A549 (cell line): ENCODE measurements at regions of chr17 and their contacts with region 1.

Region 1: DNA sequence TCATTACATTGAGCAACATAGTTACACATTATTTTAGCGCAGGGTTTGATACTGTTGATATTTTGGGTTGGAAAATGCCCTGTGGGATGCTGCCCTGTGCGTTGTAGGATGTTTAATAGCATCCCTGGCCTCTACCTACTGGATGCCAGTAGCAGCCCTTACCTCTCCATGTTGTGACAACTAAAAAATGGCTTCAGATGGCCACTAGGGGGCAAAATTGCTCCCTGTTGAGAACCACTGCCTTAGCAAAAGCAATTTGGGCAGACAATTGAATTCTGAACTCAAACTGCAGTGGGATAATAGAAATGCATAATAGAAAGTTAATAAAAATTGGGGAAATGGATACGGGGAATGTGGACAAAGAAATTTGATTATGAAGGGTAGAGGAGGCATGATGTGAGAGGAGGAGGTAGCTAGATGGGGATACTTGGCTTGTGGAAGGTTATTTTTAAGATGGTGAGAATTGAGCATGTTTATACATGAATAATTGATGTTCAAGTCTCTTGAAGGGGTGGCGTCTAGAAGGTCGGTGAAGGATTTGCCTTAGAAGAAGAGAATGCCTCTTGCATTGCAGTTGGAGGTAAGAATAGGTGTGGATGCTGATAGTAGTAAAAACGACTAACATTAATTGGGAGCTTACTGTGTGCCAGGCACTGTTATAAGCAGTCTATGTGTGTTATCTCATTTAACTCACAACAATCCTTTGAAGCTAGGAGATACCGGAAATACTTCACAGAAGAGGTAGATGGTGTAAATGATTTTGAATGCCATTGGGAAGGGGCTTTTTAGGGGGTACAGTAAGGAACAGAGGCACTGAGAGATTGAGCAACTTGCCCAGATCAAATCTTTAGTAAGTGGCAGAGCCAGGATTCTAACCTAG is 19.0 kb downstream of the HEATR9 start:
- DNase-seq: peak; percentile 67 to 81
- ATAC-seq: peak; percentile 87 to 91
- H3K4me3 ChIP-seq: no peak overlapping the region
- H3K27ac ChIP-seq: no peak overlapping the region
- H3K4me1 ChIP-seq: no peaks in the 10 kb centered on the region
- CTCF ChIP-seq: peak; percentile 91
- EP300 ChIP-seq: no peak
- POLR2A ChIP-seq: no peak
- RAD21 ChIP-seq: peak; percentile 58 to 68; a peak in 4 of 5 replicates

Region 2: DNA sequence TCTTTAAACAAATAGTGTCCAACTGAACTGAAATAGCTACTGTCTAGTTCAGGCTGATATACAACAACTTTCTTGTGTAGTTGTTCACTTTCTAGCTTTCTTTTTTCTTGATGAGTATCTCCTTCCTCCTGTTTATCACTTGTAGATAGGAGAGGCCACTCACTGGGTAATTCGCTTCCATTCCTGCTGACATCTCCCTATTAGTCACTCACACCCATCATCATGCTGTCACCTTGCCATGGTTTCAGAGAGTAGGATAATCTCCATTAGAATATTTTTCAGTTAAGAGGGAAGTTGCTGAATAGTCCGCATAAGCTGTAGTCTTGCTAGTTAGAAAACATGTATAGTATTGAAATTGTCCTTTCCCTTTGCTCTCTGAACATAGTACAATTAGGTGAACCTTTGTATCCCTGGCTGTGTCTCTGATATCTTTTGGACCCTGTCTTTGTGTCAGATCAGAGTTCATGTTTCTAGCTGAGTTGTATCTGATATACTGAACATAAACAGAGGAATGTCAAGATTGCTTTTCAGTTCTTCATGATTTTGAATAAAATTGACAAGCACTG is 182.7 kb before region 1 on chr17:
- CTCF ChIA-PET with region 1: no interaction called
- POLR2A ChIA-PET with region 1: no interaction called
- DNase-seq: no peak
- ATAC-seq: no peak
- H3K4me3 ChIP-seq: no peak overlapping the region
- H3K27ac ChIP-seq: no peak overlapping the region
- H3K4me1 ChIP-seq: no peaks in the 10 kb centered on the region
- CTCF ChIP-seq: no peak
- EP300 ChIP-seq: no peak
- POLR2A ChIP-seq: no peak
- RAD21 ChIP-seq: no peak

Region 3: GRCh38 chr17:35819456-35819855 is 30.3 kb before region 1 on chr17:
- CTCF ChIA-PET with region 1: interaction called, 12 read pairs
- POLR2A ChIA-PET with region 1: no interaction called
- DNase-seq: no peak
- ATAC-seq: no peak
- H3K4me3 ChIP-seq: no peak overlapping the region
- H3K27ac ChIP-seq: no peak overlapping the region
- H3K4me1 ChIP-seq: peaks cover 25% of the 10 kb centered on the region
- CTCF ChIP-seq: no peak
- EP300 ChIP-seq: no peak
- POLR2A ChIP-seq: no peak
- RAD21 ChIP-seq: no peak

Region 4: GRCh38 chr17:35825206-35825605 is 24.5 kb before region 1 on chr17:
- CTCF ChIA-PET with region 1: interaction called, 12 read pairs
- POLR2A ChIA-PET with region 1: no interaction called
- DNase-seq: no peak
- ATAC-seq: no peak
- H3K4me3 ChIP-seq: no peak overlapping the region
- H3K27ac ChIP-seq: no peak overlapping the region
- H3K4me1 ChIP-seq: 0 out of 3 replicates have a peak, but pooled peaks cover 3% of the 10 kb centered on the region
- CTCF ChIP-seq: no peak
- EP300 ChIP-seq: no peak
- POLR2A ChIP-seq: no peak
- RAD21 ChIP-seq: no peak

Region 5: DNA sequence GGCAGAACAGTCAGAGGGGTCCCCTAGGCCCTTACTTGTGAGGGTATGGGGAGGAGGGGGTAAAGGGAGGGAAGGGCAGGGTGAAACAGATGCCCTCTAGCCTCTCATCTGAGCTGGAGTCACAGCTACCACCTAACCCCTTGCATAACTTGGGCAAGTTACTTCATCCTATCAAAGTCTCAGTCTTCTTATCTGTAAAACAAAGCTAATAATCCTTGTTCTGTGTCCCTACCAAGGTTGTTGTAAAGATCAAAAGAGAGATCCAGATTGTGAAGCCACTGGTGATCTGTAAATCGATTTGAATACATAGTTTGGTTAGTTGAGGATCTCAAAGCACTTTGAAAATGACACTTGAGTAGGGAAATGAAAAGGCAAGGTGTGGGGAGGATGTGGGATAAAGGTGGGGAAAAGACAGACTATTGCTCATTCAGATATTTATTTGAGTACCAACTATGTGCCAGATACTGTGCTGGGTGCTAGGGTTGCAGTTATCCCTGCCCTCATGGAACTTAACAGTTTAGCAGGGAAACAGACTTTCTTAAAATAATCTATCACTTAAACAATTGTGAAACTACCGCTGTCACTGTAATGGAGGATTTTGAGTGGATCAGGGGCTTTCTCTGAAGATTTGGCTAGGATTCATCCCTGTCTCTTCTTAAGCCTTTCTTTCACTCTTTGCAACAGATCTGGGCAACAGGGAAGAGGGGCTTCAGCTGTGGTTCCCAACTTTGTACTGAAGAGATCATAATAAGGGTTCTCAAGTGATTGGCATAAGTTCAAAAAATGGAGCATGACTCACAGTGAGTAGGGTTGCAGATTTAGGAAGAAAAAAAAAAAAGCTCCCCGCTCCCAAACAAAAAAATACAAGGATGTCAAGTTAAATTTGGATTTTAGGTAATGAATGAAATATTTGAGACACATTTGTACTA is 16.0 kb after region 1 on chr17:
- CTCF ChIA-PET with region 1: interaction called, 41 read pairs
- POLR2A ChIA-PET with region 1: no interaction called
- DNase-seq: no peak
- ATAC-seq: no peak
- H3K4me3 ChIP-seq: no peak overlapping the region
- H3K27ac ChIP-seq: no peak overlapping the region
- H3K4me1 ChIP-seq: peaks cover 9% of the 10 kb centered on the region; the same call in 2 of the 3 replicates
- CTCF ChIP-seq: no peak
- EP300 ChIP-seq: no peak
- POLR2A ChIP-seq: no peak
- RAD21 ChIP-seq: no peak

Region 6: DNA sequence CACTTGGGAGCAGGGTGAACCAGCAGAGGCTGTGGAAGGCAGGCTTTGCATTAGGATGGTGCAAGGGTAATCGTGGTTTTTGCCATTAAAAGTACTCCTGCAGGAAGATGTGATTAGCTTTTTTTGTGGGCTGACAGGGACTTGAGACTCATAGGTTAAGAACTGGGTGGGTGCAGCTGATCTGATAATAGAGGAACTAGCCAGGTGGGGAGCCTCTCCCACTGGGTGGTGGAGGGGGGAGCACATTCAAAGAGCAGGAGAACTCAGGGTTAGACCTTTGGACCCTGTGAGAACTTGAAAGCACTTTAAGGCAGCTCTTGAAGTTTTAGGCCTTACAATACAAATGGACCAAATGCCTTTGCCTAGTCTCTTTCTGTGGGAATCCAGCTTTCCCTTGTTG is 286.3 kb after region 1 on chr17:
- CTCF ChIA-PET with region 1: no interaction called
- POLR2A ChIA-PET with region 1: no interaction called
- DNase-seq: no peak
- ATAC-seq: no peak
- H3K4me3 ChIP-seq: no peak overlapping the region
- H3K27ac ChIP-seq: no peak overlapping the region
- H3K4me1 ChIP-seq: no peaks in the 10 kb centered on the region
- CTCF ChIP-seq: no peak
- EP300 ChIP-seq: no peak
- POLR2A ChIP-seq: no peak
- RAD21 ChIP-seq: no peak